CD8-positive, alpha-beta T cell (primary cell): ENCODE measurements at regions of chr14 and their contacts with region 1.

Region 1: GRCh38 chr14:68685419-68686204 is 107.3 kb downstream of the ZFP36L1 start:
- DNase-seq: peak; percentile 67 to 94 (median 84)
- ATAC-seq: peak; percentile 87
- H3K4me3 ChIP-seq: no peak overlapping the region
- H3K4me3 Mint-ChIP-seq: peak overlapping the region; percentile 23
- H3K27ac ChIP-seq: peak overlapping the region; percentile 50 to 70
- H3K27ac Mint-ChIP-seq: peak overlapping the region; percentile 96
- H3K4me1 ChIP-seq: peaks cover 56% of the 10 kb centered on the region
- H3K4me1 Mint-ChIP-seq: peaks cover 70% of the 10 kb centered on the region
- H3K27me3 ChIP-seq: no peaks in the 10 kb centered on the region
- H3K27me3 Mint-ChIP-seq: no peaks in the 10 kb centered on the region
- CTCF ChIP-seq: no peak

Region 2: DNA sequence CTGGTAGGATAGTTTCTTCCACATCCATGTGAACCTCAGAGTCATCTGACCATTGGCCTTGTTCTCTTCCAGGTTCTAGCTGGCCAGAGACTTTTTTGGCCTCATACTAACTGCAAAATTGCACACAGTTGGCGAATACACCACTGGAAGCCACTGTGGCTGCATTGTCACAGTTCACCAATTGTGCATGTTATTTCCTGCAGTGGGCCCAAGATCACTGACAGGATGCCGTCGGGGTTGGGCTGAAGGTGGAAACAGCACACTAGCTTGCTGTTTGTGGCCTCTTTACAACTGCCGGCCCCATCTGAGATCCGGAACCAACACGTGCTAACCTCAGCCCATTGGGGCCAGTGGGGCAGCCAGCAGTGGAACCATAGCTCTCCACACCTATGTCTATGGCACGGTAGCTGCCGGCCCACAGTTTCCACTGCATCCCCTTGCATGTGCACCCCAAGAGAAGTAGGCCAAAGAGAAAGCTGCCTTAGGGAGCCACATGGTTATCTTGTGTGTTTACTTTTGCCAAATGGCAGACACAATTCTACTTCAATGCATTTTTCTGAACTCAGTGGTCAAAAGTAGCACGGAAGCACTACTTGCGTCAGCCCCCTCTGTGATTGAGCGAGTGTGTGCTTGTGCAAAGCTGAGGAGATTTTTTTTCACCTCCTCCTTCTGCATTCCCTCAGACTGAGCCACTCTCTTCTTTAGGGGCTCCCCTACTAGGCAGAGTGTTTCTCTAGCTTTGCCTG is 402.1 kb before region 1 on chr14:
- CTCF ChIA-PET with region 1: no interaction called
- POLR2A ChIA-PET with region 1: interaction called, 7 read pairs
- intact Hi-C with region 1: loop called (anchors 5 to 10 kb)
- DNase-seq: peak; percentile 32 to 87 (median 72)
- ATAC-seq: peak; percentile 69
- H3K4me3 ChIP-seq: peak overlapping the region in 1 of 2 experiments; percentile 6
- H3K4me3 Mint-ChIP-seq: peak overlapping the region; percentile 62
- H3K27ac ChIP-seq: peak overlapping the region; percentile 57 to 89
- H3K27ac Mint-ChIP-seq: peak overlapping the region; percentile 98
- H3K4me1 ChIP-seq: peaks cover 71% of the 10 kb centered on the region
- H3K4me1 Mint-ChIP-seq: peaks cover 85% of the 10 kb centered on the region
- H3K27me3 ChIP-seq: no peaks in the 10 kb centered on the region
- H3K27me3 Mint-ChIP-seq: no peaks in the 10 kb centered on the region
- CTCF ChIP-seq: no peak

Region 3: DNA sequence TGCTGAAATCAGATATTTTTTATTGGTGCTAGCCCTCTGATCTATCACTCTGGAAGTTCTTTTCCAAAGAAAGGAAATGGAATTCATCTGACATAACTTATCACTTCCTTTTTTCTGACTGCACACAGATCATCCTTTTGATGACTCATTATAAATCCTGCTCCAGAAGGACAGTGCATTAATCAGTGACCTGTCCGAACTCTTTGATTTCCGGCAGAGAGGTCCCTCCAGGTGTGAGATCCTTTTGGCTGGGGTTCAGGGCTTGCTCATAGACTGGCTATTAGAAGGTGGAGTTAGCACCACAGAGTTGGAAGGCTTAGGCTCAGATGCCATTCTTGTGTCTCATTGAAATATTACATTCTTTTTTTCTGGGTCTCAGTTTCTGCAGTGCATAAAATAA is 220.9 kb before region 1 on chr14:
- CTCF ChIA-PET with region 1: no interaction called
- POLR2A ChIA-PET with region 1: no interaction called
- intact Hi-C with region 1: no loop called
- DNase-seq: no peak
- ATAC-seq: no peak
- H3K4me3 ChIP-seq: no peak overlapping the region
- H3K4me3 Mint-ChIP-seq: no peak overlapping the region
- H3K27ac ChIP-seq: no peak overlapping the region
- H3K27ac Mint-ChIP-seq: no peak overlapping the region
- H3K4me1 ChIP-seq: peaks cover 11% of the 10 kb centered on the region
- H3K4me1 Mint-ChIP-seq: peaks cover 13% of the 10 kb centered on the region
- H3K27me3 ChIP-seq: no peaks in the 10 kb centered on the region
- H3K27me3 Mint-ChIP-seq: no peaks in the 10 kb centered on the region
- CTCF ChIP-seq: no peak

Region 4: GRCh38 chr14:68506021-68506644 is 179.5 kb before region 1 on chr14:
- CTCF ChIA-PET with region 1: no interaction called
- POLR2A ChIA-PET with region 1: interaction called, 11 read pairs
- intact Hi-C with region 1: loop called in 1 of 2 experiments (anchors 5 kb)
- DNase-seq: peak in 1 of 9 experiments; percentile 25
- ATAC-seq: no peak
- H3K4me3 ChIP-seq: no peak overlapping the region
- H3K4me3 Mint-ChIP-seq: peak overlapping the region; percentile 64
- H3K27ac ChIP-seq: peak overlapping the region; percentile 49 to 52
- H3K27ac Mint-ChIP-seq: peak overlapping the region; percentile 91
- H3K4me1 ChIP-seq: peaks cover 64% of the 10 kb centered on the region
- H3K4me1 Mint-ChIP-seq: peaks cover 73% of the 10 kb centered on the region
- H3K27me3 ChIP-seq: no peaks in the 10 kb centered on the region
- H3K27me3 Mint-ChIP-seq: no peaks in the 10 kb centered on the region
- CTCF ChIP-seq: no peak

Region 5: GRCh38 chr14:68607081-68607886 is 78.3 kb before region 1 on chr14:
- CTCF ChIA-PET with region 1: no interaction called
- POLR2A ChIA-PET with region 1: no interaction called
- intact Hi-C with region 1: no loop called
- DNase-seq: no peak
- ATAC-seq: no peak
- H3K4me3 ChIP-seq: no peak overlapping the region
- H3K4me3 Mint-ChIP-seq: peak overlapping the region; percentile 13
- H3K27ac ChIP-seq: no peak overlapping the region
- H3K27ac Mint-ChIP-seq: peak overlapping the region; percentile 62
- H3K4me1 ChIP-seq: peaks cover 15% of the 10 kb centered on the region
- H3K4me1 Mint-ChIP-seq: peaks cover 17% of the 10 kb centered on the region
- H3K27me3 ChIP-seq: no peaks in the 10 kb centered on the region
- H3K27me3 Mint-ChIP-seq: no peaks in the 10 kb centered on the region
- CTCF ChIP-seq: no peak

Region 6: GRCh38 chr14:68627880-68628607 is 57.6 kb before region 1 on chr14:
- CTCF ChIA-PET with region 1: no interaction called
- POLR2A ChIA-PET with region 1: interaction called, 4 read pairs
- intact Hi-C with region 1: loop called in 1 of 2 experiments (anchors 5 kb)
- DNase-seq: peak; percentile 12 to 80 (median 61)
- ATAC-seq: peak; percentile 65
- H3K4me3 ChIP-seq: peak overlapping the region; percentile 42 to 46
- H3K4me3 Mint-ChIP-seq: peak overlapping the region; percentile 81
- H3K27ac ChIP-seq: peak overlapping the region in 1 of 2 experiments; percentile 30
- H3K27ac Mint-ChIP-seq: peak overlapping the region; percentile 84
- H3K4me1 ChIP-seq: peaks cover 16% of the 10 kb centered on the region
- H3K4me1 Mint-ChIP-seq: peaks cover 23% of the 10 kb centered on the region
- H3K27me3 ChIP-seq: no peaks in the 10 kb centered on the region
- H3K27me3 Mint-ChIP-seq: no peaks in the 10 kb centered on the region
- CTCF ChIP-seq: no peak

Region 7: GRCh38 chr14:68718023-68718995 is 32.7 kb after region 1 on chr14:
- CTCF ChIA-PET with region 1: no interaction called
- POLR2A ChIA-PET with region 1: interaction called, 3 read pairs
- intact Hi-C with region 1: loop called in 1 of 2 experiments (anchors 2 kb)
- DNase-seq: peak in 1 of 9 experiments; percentile 18
- ATAC-seq: peak; percentile 36
- H3K4me3 ChIP-seq: no peak overlapping the region
- H3K4me3 Mint-ChIP-seq: no peak overlapping the region
- H3K27ac ChIP-seq: no peak overlapping the region
- H3K27ac Mint-ChIP-seq: no peak overlapping the region
- H3K4me1 ChIP-seq: peaks cover 8% of the 10 kb centered on the region
- H3K4me1 Mint-ChIP-seq: peaks cover 33% of the 10 kb centered on the region
- H3K27me3 ChIP-seq: no peaks in the 10 kb centered on the region
- H3K27me3 Mint-ChIP-seq: no peaks in the 10 kb centered on the region
- CTCF ChIP-seq: no peak

Region 8: GRCh38 chr14:68734231-68734775 is 48.7 kb after region 1 on chr14:
- CTCF ChIA-PET with region 1: no interaction called
- POLR2A ChIA-PET with region 1: interaction called, 3 read pairs
- intact Hi-C with region 1: loop called in 1 of 2 experiments (anchors 5 kb)
- DNase-seq: peak in 8 of 9 experiments; percentile 11 to 69 (median 51)
- ATAC-seq: peak; percentile 81
- H3K4me3 ChIP-seq: no peak overlapping the region
- H3K4me3 Mint-ChIP-seq: peak overlapping the region; percentile 19
- H3K27ac ChIP-seq: peak overlapping the region in 1 of 2 experiments; percentile 76
- H3K27ac Mint-ChIP-seq: peak overlapping the region; percentile 87
- H3K4me1 ChIP-seq: peaks cover 21% of the 10 kb centered on the region
- H3K4me1 Mint-ChIP-seq: peaks cover 34% of the 10 kb centered on the region
- H3K27me3 ChIP-seq: no peaks in the 10 kb centered on the region
- H3K27me3 Mint-ChIP-seq: no peaks in the 10 kb centered on the region
- CTCF ChIP-seq: no peak

Region 9: GRCh38 chr14:68780358-68781160 is 94.9 kb after region 1 on chr14:
- CTCF ChIA-PET with region 1: interaction called, 6 read pairs
- POLR2A ChIA-PET with region 1: interaction called, 32 read pairs
- intact Hi-C with region 1: loop called (anchors 1 to 2 kb)
- DNase-seq: peak in 5 of 9 experiments; percentile 36 to 72 (median 58)
- ATAC-seq: peak; percentile 11
- H3K4me3 ChIP-seq: peak overlapping the region; percentile 29 to 41
- H3K4me3 Mint-ChIP-seq: peak overlapping the region; percentile 83
- H3K27ac ChIP-seq: peak overlapping the region; percentile 47 to 86
- H3K27ac Mint-ChIP-seq: peak overlapping the region; percentile 96
- H3K4me1 ChIP-seq: peaks cover 82% of the 10 kb centered on the region
- H3K4me1 Mint-ChIP-seq: peaks cover 84% of the 10 kb centered on the region
- H3K27me3 ChIP-seq: no peaks in the 10 kb centered on the region
- H3K27me3 Mint-ChIP-seq: no peaks in the 10 kb centered on the region
- CTCF ChIP-seq: no peak